BJ (cell line): ENCODE measurements at regions of chr2 and their contacts with region 1.

Region 1: GRCh38 chr2:120735746-120736170 is at the start of gene GLI2:
- DNase-seq: no peak
- H3K4me3 ChIP-seq: peak within 1 kb of the TSS; percentile 87
- H3K27me3 ChIP-seq: no peaks in the 10 kb centered on the region
- CTCF ChIP-seq: peak; percentile 58
- polyA plus RNA-seq, gene GLI2: 5.1 and 8.1 TPM in 2 replicates

Region 2: GRCh38 chr2:120134263-120134662 is 601.5 kb before region 1 on chr2:
- CTCF ChIA-PET with region 1: no interaction called
- POLR2A ChIA-PET with region 1: no interaction called
- DNase-seq: peak; percentile 46
- H3K4me3 ChIP-seq: no peak overlapping the region
- H3K27me3 ChIP-seq: no peaks in the 10 kb centered on the region
- CTCF ChIP-seq: no peak

Region 3: GRCh38 chr2:120699292-120699691 is 36.5 kb before region 1 on chr2:
- CTCF ChIA-PET with region 1: interaction called, 36 read pairs
- POLR2A ChIA-PET with region 1: no interaction called
- DNase-seq: no peak
- H3K4me3 ChIP-seq: no peak overlapping the region
- H3K27me3 ChIP-seq: peaks cover 2% of the 10 kb centered on the region; the same call in 1 of the 2 replicates
- CTCF ChIP-seq: no peak